Esophagus muscularis mucosa (tissue), 4 donors: ENCODE measurements at regions of chr3 and their contacts with region 1.

Region 1: GRCh38 chr3:115147329-115148141 is 447 bp upstream of the ZBTB20 start:
- DNase-seq: peak; percentile 100
- H3K4me3 ChIP-seq: peak overlapping the region; percentile 87 to 99 (median 90)
- H3K27ac ChIP-seq: peak overlapping the region; percentile 97 to 100 (median 99)
- H3K4me1 ChIP-seq: peaks cover 16 to 36% (median 33%) of the 10 kb centered on the region in 4 donors
- H3K27me3 ChIP-seq: no peaks in the 10 kb centered on the region
- CTCF ChIP-seq: no peak
- EP300 ChIP-seq: no peak
- POLR2A ChIP-seq: peak; percentile 66

Region 2: GRCh38 chr3:115092220-115092791 is 55.2 kb before region 1 on chr3:
- intact Hi-C with region 1: loop called (anchors 10 kb)
- DNase-seq: no peak
- H3K4me3 ChIP-seq: no peak overlapping the region
- H3K27ac ChIP-seq: no peak overlapping the region
- H3K4me1 ChIP-seq: peaks cover 38 to 47% (median 43%) of the 10 kb centered on the region in 4 donors
- H3K27me3 ChIP-seq: no peaks in the 10 kb centered on the region
- CTCF ChIP-seq: peak; percentile 73 to 85 (median 82)
- EP300 ChIP-seq: no peak
- POLR2A ChIP-seq: no peak